HAP-1 (cell line): ENCODE measurements at regions of chr6 and their contacts with region 1.

Region 1: GRCh38 chr6:70706491-70707123 is 38.9 kb downstream of the SMAP1 start:
- DNase-seq: peak; percentile 22 to 71
- H3K4me3 ChIP-seq: no peak overlapping the region
- H3K4me1 ChIP-seq: peaks cover 8% of the 10 kb centered on the region
- H3K27me3 ChIP-seq: no peaks in the 10 kb centered on the region

Region 2: GRCh38 chr6:70886661-70887060 is 180.1 kb after region 1 on chr6:
- in situ Hi-C with region 1: loop called (anchors 5 kb)
- DNase-seq: no peak
- H3K4me3 ChIP-seq: no peak overlapping the region
- H3K4me1 ChIP-seq: no peaks in the 10 kb centered on the region
- H3K27me3 ChIP-seq: no peaks in the 10 kb centered on the region

Region 3: DNA sequence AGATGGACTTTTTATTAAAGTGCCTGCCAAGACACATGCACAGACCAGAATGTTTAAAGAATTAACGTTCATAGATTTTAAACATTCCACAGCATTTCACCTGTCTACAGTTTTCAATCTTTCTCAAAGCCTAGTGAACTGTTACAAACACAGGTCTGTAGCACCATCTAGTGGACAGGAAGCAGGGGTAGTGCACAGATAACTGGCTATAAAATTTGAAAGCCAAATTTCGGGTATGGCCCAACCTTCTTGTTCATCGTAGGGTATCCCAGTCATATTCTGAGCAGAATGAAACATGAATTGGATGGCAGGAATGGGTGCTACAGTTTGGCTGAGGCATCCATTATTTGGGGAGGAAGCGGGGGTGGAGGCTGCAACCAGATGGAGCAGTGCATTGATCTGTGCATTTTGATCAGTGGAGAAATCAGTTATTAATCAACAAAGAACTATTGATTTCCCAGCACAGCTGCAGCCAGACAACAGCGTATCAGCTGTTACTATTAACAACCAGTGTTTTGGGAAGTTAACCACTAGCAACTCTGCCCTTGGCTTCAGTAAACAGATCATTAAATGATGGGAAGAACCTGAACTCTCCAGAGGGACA is 306.4 kb after region 1 on chr6:
- in situ Hi-C with region 1: loop called (anchors 10 kb)
- DNase-seq: peak; percentile 49 to 76
- H3K4me3 ChIP-seq: no peak overlapping the region
- H3K4me1 ChIP-seq: peaks cover 7% of the 10 kb centered on the region
- H3K27me3 ChIP-seq: no peaks in the 10 kb centered on the region